ENCODE measurements at regions of chrX and their contacts with region 1.

Region 1: DNA sequence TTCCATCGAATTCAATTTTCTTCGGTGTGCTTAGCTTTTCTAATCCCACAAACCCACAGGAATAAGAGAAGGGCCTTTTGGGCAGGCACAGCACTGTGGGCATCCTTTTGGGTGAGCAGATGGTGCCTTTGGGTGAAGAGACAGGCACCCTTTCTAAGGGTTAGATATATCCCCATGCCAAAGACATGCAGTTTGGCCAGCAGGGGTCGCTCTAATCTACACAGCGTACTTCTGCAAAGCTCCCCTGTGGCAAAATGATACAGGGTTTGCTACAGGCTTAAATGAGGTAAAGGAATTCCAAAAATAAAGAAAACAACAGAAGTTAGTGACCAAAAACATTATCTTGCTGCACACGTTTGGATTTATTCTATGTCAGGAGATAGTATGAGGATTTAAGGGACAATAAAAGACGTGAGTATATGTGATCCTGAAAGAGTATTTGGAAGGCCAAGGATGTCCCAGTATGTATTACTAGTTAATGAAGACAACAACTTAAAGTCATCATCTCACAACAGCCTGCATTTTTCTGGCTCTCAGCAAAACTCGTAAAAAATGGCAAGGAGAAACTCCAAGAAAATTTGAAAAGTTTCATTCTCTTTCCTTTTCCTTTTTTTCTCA is 49.5 kb downstream of the PHEX start:
- DNase-seq: peak; percentile 46
- ATAC-seq: no peak
- H3K4me3 Mint-ChIP-seq: no peak overlapping the region
- H3K27ac Mint-ChIP-seq: no peak overlapping the region
- H3K4me1 Mint-ChIP-seq: no peaks in the 10 kb centered on the region
- H3K27me3 Mint-ChIP-seq: no peaks in the 10 kb centered on the region

Region 2: DNA sequence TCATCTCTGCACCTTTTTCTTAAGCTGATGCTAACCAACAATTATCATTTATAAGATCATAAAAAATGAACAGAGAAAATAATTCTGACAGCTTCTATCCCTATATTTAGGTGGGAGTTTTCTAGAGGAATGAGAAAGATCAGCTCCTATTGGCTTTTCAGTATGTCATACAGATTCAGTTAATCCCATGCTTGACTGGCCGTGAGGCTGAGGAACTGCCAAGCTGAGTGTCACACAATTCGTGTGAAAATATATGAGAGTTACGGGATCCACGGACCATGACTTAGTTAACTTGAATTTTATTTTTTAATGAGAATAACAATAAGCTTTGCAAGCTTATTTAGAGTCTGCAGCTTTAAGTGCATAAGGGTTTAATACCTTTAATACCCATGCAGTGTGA is 12.0 kb before region 1 on chrX:
- CTCF ChIA-PET with region 1: interaction called, 12 read pairs
- POLR2A ChIA-PET with region 1: no interaction called
- DNase-seq: no peak
- ATAC-seq: no peak
- H3K4me3 Mint-ChIP-seq: no peak overlapping the region
- H3K27ac Mint-ChIP-seq: no peak overlapping the region
- H3K4me1 Mint-ChIP-seq: peaks cover 4% of the 10 kb centered on the region
- H3K27me3 Mint-ChIP-seq: no peaks in the 10 kb centered on the region

Measured in activated CD8-positive, alpha-beta T cell treated with anti-CD3 and anti-CD28 coated beads, Interleukin-2, amount 10 ng/mL, durations not matched to agents 7 days and 5 days (primary cell).